ENCODE measurements at regions of chr10 and their contacts with region 1.

Region 1: DNA sequence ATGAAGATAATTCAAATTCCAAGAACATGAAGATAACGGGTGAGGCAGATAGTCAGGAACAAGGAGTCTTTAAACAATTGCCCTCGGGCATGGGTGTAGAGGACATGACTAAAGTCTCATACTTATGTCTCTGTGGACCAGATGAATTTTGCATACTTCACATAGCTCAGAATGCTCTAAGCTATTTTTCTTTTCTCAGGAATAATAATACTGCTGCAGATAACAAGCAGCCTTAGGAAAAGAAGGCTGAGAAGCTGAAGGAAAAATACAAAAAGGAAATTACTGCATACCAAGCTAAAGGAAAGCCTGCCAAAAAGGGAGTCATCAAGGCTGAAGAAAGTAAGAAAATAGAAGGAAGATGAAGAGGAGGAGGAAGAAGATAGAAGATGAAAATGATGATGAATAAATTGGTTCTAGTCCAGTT is 13.3 kb upstream of the ERCC6 start:
- DNase-seq: peak; percentile 87
- H3K4me3 ChIP-seq: no peak overlapping the region
- H3K27me3 ChIP-seq: no peaks in the 10 kb centered on the region
- CTCF ChIP-seq: no peak

Region 2: GRCh38 chr10:49538381-49539319 is 13.6 kb before region 1 on chr10 and contains the start of gene ERCC6:
- CTCF ChIA-PET with region 1: interaction called, 10 read pairs
- POLR2A ChIA-PET with region 1: interaction called, 14 read pairs
- DNase-seq: peak; percentile 91
- H3K4me3 ChIP-seq: peak within 1 kb of the TSS; percentile 84
- H3K27me3 ChIP-seq: no peaks in the 10 kb centered on the region
- CTCF ChIP-seq: no peak
- polyA plus RNA-seq, gene ERCC6: 22.1 and 26.1 TPM in 2 replicates

Region 3: DNA sequence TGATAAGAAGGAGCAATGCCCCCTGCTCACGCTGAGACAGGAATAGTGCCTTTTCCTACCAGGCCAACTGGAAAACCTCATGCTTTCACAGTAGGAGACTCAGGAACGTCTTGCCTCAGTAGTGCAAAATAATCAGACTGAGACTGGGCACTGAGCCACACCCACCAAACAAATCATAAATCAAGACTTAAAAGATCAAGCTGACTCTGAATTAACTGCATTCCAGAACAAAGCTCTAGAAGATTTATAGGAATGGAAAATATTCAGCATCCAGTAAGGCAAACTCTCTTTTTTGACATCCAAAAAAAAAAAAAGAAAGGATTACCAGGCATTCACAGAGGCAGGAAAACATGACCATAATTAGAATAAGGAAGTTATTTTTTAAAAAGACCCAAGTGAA is 27.4 kb after region 1 on chr10:
- CTCF ChIA-PET with region 1: no interaction called
- POLR2A ChIA-PET with region 1: no interaction called
- DNase-seq: peak; percentile 55
- H3K4me3 ChIP-seq: no peak overlapping the region
- H3K27me3 ChIP-seq: no peaks in the 10 kb centered on the region
- CTCF ChIP-seq: no peak